ENCODE measurements at regions of chr4 and their contacts with region 1.

Region 1: DNA sequence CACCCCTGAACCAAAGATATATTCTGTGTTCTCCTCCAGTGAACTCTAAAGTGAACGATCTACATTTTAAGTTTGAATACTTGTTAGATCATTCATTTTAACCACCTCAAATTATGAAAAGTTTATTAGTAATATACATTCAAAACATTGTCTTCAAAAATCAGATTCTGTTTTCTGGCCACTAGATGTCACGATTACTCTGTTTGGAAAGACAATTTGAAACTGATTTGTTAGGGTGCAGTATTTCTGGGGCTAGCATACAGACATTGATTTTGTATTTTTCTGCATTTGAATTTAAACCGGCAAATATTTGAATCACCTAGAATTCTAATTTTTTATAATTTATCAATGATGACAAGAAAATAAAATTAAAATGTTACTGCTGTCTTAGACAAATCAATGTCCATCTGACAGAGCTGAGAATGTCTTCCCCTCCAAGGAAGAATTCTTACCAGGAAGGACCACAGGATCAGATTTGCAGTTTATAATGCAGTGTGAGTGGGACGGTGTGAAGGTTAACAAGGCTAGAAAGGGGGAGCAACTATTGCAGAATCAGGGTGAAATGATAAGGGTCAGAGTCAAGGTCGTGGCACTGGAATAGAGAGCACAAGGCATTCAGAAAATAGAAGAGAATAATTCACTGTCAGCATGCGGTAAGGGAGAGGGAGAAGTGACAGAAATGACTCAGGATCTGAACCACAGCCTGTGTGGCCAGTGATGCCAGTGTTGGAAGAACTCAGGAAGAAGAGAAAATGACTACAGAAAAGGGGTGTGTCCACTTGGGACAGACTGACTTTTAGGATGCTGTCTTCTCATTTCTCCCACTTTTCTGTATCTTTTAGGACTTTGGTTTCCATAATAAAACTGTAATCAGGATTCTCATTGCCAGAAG is 91.6 kb downstream of the ANXA10 start:
- DNase-seq: peak in 3 of 5 donors; percentile 10 to 15 (median 13)
- H3K4me3 ChIP-seq: no peak overlapping the region
- H3K4me3 Mint-ChIP-seq: no peak overlapping the region
- H3K27ac ChIP-seq: no peak overlapping the region
- H3K27ac Mint-ChIP-seq: no peak overlapping the region
- H3K4me1 ChIP-seq: no peaks in the 10 kb centered on the region
- H3K4me1 Mint-ChIP-seq: no peaks in the 10 kb centered on the region
- H3K27me3 ChIP-seq: no peaks in the 10 kb centered on the region
- H3K27me3 Mint-ChIP-seq: no peaks in the 10 kb centered on the region

Region 2: GRCh38 chr4:167088115-167088514 is 1095.8 kb before region 1 on chr4:
- CTCF ChIA-PET with region 1: no interaction called
- POLR2A ChIA-PET with region 1: no interaction called
- intact Hi-C with region 1: no loop called
- DNase-seq: no peak
- H3K4me3 ChIP-seq: no peak overlapping the region
- H3K4me3 Mint-ChIP-seq: no peak overlapping the region
- H3K27ac ChIP-seq: no peak overlapping the region
- H3K27ac Mint-ChIP-seq: no peak overlapping the region
- H3K4me1 ChIP-seq: no peaks in the 10 kb centered on the region
- H3K4me1 Mint-ChIP-seq: no peaks in the 10 kb centered on the region
- H3K27me3 ChIP-seq: no peaks in the 10 kb centered on the region
- H3K27me3 Mint-ChIP-seq: no peaks in the 10 kb centered on the region

Region 3: GRCh38 chr4:168221301-168221700 is 37.3 kb after region 1 on chr4:
- CTCF ChIA-PET with region 1: no interaction called
- POLR2A ChIA-PET with region 1: no interaction called
- intact Hi-C with region 1: no loop called
- DNase-seq: no peak
- H3K4me3 ChIP-seq: no peak overlapping the region
- H3K4me3 Mint-ChIP-seq: no peak overlapping the region
- H3K27ac ChIP-seq: no peak overlapping the region
- H3K27ac Mint-ChIP-seq: peak overlapping the region in 1 of 7 donors; percentile 69
- H3K4me1 ChIP-seq: no peaks in the 10 kb centered on the region
- H3K4me1 Mint-ChIP-seq: peaks cover 0 to 10% (median 4%) of the 10 kb centered on the region in 4 donors
- H3K27me3 ChIP-seq: no peaks in the 10 kb centered on the region
- H3K27me3 Mint-ChIP-seq: no peaks in the 10 kb centered on the region

Region 4: DNA sequence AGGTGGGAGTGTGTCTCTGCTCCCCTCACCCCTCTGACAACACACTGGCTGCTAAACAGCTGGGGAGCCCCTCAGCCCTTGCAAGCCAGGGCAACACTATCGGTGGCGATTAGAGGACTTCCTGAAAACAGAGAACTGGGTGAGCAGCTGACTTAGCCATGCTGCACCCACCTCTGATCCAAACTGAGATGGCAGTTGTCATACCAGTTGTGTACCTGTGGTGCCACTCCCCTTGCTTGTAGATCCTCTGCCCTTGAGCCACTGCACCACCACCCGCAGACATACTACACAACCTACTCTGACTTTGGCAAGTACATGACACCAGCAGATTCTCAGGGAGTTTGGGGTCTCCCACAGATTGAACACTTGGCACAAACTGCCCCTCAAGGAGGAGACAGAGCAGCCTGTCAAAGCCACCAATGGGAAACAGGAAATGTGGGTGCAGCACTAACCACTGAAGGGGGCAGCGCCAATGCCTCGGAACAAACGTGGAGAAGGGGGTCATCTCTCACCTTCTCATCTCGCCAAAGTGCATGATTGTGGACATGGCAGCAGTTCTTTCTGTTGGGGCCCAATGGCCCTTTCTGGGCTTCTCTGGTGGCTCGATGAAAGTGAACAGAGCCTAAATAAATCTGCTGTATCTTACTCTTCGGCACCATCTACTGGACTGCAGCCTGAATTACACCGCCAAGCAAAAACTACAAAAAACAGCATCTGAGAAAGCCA is 1308.6 kb after region 1 on chr4:
- CTCF ChIA-PET with region 1: interaction called, 4 read pairs
- POLR2A ChIA-PET with region 1: no interaction called
- intact Hi-C with region 1: loop called (anchors 5 kb)
- DNase-seq: peak in 4 of 5 donors; percentile 18 to 28 (median 24)
- H3K4me3 ChIP-seq: no peak overlapping the region
- H3K4me3 Mint-ChIP-seq: peak overlapping the region in 1 of 8 donors; percentile 0
- H3K27ac ChIP-seq: no peak overlapping the region
- H3K27ac Mint-ChIP-seq: peak overlapping the region in 2 of 7 donors; percentile 5 to 43
- H3K4me1 ChIP-seq: no peaks in the 10 kb centered on the region
- H3K4me1 Mint-ChIP-seq: peaks cover 0 to 16% (median 5%) of the 10 kb centered on the region in 4 donors
- H3K27me3 ChIP-seq: no peaks in the 10 kb centered on the region
- H3K27me3 Mint-ChIP-seq: no peaks in the 10 kb centered on the region

Region 5: GRCh38 chr4:169566021-169566818 is 1382.3 kb after region 1 on chr4:
- CTCF ChIA-PET with region 1: interaction called, 3 read pairs
- POLR2A ChIA-PET with region 1: no interaction called
- intact Hi-C with region 1: loop called (anchors 5 kb)
- DNase-seq: peak in 4 of 5 donors; percentile 23 to 40 (median 26)
- H3K4me3 ChIP-seq: no peak overlapping the region
- H3K4me3 Mint-ChIP-seq: no peak overlapping the region
- H3K27ac ChIP-seq: no peak overlapping the region
- H3K27ac Mint-ChIP-seq: no peak overlapping the region
- H3K4me1 ChIP-seq: no peaks in the 10 kb centered on the region
- H3K4me1 Mint-ChIP-seq: peaks cover 4 to 5% (median 4%) of the 10 kb centered on the region in 4 donors
- H3K27me3 ChIP-seq: no peaks in the 10 kb centered on the region
- H3K27me3 Mint-ChIP-seq: no peaks in the 10 kb centered on the region

Region 6: DNA sequence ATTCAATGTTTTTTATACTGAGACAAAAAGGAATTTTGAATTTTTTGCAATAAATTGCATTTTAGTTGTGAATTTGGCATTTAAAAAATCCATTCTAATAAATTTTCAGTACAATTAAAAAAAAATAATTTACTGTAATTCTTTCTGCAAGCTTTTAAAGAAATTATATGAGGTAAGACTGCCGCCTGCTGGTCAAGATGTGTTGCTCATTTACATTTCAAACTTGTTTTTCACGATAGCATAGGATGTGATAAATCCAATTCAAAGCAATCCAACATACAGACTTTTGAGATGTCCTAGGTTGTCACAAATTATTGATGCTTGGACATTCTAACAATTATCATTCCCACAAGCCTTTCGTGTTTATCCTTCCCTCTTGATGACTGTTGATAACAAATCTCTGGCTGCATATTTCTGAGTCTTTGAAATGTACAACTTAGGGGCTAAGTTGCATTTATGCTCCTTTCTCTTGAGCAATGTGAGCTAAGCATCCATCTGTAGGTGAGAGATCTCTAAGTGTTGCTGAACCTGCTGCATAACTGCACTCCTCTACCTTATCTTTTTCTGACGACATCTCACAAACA is 1863.9 kb after region 1 on chr4:
- CTCF ChIA-PET with region 1: no interaction called
- POLR2A ChIA-PET with region 1: no interaction called
- intact Hi-C with region 1: loop called (anchors 5 kb)
- DNase-seq: peak; percentile 54 to 61 (median 56)
- H3K4me3 ChIP-seq: no peak overlapping the region
- H3K4me3 Mint-ChIP-seq: no peak overlapping the region
- H3K27ac ChIP-seq: no peak overlapping the region
- H3K27ac Mint-ChIP-seq: no peak overlapping the region
- H3K4me1 ChIP-seq: no peaks in the 10 kb centered on the region
- H3K4me1 Mint-ChIP-seq: no peaks in the 10 kb centered on the region
- H3K27me3 ChIP-seq: no peaks in the 10 kb centered on the region
- H3K27me3 Mint-ChIP-seq: peaks cover 2% of the 10 kb centered on the region in 2 donors

Measured in CD4-positive, alpha-beta memory T cell (primary cell).